A549 (cell line): ENCODE measurements at regions of chr3 and their contacts with region 1.

Region 1: GRCh38 chr3:123672429-123673146 is 87.7 kb upstream of the HACD2 start:
- DNase-seq: no peak
- ATAC-seq: no peak
- H3K4me3 ChIP-seq: no peak overlapping the region
- H3K27ac ChIP-seq: no peak overlapping the region
- H3K4me1 ChIP-seq: no peaks in the 10 kb centered on the region
- CTCF ChIP-seq: no peak
- EP300 ChIP-seq: no peak
- POLR2A ChIP-seq: no peak
- RAD21 ChIP-seq: no peak

Region 2: GRCh38 chr3:123682781-123683504 is 10.4 kb after region 1 on chr3:
- CTCF ChIA-PET with region 1: interaction called, 10 read pairs
- POLR2A ChIA-PET with region 1: no interaction called
- DNase-seq: no peak
- ATAC-seq: no peak
- H3K4me3 ChIP-seq: no peak overlapping the region
- H3K27ac ChIP-seq: no peak overlapping the region
- H3K4me1 ChIP-seq: peaks cover 10% of the 10 kb centered on the region
- CTCF ChIP-seq: no peak
- EP300 ChIP-seq: no peak
- POLR2A ChIP-seq: no peak
- RAD21 ChIP-seq: no peak